GM10248 (cell line): ENCODE measurements at regions of chr10 and their contacts with region 1.

Region 1: DNA sequence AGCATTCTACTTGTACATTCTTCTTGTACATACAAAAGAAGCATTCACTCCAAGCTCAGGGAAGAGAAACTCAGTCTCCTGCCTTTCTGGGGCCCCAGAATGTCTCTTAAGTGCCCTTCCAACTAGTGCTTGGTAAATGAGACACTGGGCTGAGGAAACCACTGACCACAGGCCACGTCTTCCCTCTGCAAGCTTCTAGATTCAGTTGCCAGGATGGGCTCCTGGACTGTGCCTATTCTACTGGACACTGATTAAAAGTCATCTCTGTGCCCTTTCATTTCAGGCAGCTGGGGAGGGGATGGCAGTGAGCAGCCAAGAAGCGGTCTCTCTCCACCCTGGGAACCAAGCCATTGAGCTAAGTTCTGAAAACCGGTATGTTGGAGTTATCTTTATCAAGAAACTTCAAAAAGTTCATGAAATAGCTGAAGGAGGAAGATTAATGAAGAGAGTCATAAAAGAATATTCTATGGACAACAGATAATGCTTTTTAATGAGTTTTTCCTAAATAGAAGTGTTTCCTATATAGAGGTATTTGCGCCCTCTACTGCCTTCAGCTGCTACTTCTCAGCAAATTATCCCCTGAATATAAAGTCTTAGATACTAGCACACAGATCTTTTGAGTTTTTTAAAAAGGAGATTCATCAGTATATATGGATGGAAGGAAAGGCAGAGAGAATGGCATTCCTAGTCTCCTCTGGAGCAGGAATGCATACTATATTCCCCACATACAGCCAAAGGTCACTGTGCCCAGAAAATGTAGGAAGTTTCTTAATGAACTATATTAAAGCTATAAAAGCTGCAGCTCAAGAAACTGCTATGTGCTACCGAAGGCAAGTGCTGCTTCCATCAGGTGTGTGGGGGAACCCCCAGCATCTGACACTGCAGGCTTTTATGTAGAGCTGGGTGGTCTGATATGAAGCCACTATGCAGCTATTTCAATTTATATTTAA is 8.4 kb upstream of the IFIT1B start:
- DNase-seq: peak; percentile 46
- CTCF ChIP-seq: peak; percentile 70

Region 2: DNA sequence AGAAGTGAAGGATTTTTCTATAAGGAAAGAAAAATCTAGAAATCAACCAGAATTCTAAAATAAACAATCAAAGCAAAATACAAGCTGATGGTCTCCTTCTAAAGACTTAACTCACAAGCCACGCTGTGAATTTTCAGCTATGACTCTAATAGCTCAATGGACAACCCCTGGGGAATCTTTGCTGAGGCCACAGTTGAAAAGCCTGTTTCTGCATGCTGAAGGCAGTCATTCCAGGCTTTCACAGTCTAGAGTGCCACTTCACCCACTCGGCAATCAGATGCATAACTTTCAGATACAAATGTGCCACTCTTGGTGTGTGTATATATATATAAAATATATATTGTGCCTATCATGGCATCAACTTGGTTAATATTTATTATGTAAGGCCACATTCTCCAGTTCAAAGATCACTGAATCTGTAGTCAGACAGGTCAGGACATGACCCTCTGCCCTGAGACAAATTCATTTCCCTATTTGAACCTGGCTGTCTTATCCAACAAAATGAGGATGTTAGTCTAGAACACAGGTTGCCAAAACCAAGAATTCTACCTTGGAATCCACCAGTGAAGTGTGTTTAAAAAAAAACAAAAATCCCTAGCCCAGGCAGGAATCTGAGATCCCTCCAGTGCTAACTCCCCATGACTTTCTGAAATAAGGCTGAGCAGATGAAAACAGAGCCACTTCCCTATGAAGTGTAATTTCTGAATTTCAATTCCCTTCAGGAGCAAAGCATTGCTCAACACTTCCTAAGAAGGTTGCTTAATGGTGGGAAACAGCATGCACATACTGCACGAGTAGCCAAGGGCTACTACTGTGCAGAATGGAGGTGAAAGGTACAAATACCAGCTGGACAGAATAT is 127.7 kb before region 1 on chr10:
- CTCF ChIA-PET with region 1: interaction called, 16 read pairs
- POLR2A ChIA-PET with region 1: no interaction called
- DNase-seq: no peak
- CTCF ChIP-seq: no peak

Region 3: DNA sequence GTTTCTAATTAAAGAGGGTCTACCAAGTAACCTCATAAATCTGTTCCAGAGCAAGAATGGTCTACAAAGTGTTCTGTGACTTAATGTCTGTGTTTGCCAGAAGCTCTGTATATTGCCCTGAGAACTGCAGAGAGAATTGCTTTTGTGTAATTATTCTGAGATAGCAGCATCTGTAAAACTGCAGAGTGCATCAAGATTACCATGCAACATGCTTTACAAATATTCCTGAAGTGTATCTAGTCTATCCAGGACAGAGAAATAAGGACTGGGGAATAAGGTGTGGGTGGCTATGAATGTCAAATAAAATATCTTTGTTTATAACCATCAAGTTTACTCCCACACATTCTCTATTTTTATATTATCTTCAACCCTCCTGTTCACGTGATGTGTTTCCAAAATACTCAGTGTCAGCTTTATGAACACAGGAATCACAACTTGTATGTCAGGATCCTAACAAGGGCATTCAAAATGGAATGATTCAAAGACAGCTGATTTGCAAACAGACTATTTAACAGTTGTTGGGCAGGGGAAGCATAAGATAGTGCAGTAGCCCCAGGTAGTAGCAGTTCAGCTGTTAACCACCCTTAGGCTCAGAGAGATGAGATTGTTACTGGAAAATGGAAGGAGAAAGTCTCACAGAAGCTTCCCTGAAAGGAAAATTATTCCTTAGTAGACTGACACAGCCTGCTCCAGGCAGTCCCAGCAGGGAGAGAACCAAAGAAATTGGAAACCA is 102.5 kb before region 1 on chr10:
- CTCF ChIA-PET with region 1: interaction called, 26 read pairs
- POLR2A ChIA-PET with region 1: no interaction called
- DNase-seq: no peak
- CTCF ChIP-seq: no peak

Region 4: DNA sequence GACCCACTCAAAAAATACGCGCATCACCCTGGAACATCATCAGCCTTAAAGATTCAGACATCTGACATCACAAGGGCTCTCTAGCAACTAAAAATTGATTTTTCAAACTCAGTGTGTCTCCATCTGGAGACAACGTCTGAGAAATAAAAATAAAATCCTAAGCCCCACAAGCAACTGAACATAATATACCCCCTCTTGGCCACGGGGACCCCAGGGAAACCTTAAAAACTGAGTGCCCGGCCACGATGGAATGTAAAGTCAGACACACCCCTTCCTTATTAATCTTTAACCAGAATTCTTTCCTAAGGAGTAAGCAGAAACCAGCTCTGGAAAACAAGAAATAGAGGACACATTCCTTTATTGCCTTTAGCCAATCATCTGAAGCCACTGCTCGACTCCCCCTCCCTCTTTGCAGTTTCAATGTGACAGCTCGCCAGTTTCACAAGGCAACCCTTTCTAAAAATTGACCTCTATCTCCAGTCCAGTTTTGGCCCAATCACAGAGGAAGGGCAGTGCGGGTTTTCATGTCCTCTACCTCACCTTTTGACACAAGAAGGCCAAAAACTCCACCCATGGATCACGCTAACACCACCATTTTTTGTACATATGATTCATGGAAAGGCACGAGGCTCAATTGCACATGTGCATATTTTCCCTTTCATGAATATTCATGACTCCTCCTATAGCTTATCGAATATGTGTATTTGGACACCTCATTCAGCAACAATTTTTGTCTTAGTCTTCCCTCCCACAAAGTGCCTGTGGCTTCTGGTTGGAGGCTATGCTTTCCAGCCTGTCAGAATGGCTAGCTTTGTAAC is 17.4 kb before region 1 on chr10:
- CTCF ChIA-PET with region 1: interaction called, 46 read pairs
- POLR2A ChIA-PET with region 1: no interaction called
- DNase-seq: peak; percentile 24
- CTCF ChIP-seq: no peak

Region 5: DNA sequence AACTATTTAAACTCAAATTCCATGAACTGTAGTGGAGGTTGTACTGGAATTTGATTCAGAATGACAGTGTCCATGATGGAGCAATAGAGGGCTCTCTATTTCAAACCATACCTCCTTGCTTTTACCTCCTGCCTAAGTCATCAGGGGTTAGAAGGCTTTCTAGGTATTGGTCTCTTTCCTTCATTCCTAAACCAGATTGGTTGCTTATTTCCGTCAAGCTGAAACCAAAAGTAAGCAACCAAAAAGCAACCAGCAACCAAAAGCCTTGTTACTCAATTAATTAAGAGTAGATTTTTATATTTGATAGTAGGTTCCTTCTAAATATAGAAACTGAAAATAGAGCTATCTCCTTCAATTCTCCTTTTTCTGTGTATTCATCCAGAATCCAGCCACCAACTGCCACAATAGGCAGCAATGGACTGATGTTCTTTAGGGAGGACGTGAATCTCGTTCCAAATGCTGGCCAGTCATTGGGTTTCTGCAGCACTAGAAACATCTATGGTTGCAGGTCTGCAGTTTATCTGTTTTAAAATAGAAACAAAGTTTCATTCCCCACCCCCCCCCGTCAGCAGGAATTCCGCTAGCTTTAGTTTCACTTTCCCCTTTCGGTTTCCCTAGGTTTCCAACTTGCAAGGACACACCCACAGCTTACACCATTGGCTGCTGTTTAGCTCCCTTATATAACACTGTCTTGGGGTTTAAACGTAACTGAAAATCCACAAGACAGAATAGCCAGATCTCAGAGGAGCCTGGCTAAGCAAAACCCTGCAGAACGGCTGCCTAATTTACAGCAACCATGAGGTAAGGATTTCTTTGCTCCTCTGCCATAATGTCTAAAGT is 22.7 kb after region 1 on chr10 and contains the start of gene IFIT1:
- CTCF ChIA-PET with region 1: interaction called, 24 read pairs
- POLR2A ChIA-PET with region 1: no interaction called
- DNase-seq: peak; percentile 59
- CTCF ChIP-seq: no peak

Region 6: DNA sequence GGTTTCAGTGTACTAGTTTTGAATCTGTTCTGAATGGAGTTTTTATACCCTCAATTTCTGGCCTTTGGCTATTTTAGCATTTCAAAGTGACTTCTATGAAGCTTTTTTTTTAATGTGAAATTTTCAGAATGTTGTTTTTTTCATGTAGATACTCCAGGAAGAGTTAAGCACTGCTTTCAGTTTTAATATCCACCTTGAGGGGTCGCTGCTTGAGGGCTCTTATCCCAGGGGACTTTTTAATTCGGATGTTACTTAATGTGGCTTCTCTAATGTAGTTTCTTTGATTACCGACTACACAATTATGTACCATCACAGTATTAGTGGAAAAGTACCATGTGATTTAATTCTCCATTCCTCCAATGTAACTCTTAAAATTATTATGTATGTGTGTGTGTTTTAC is 50.1 kb after region 1 on chr10:
- CTCF ChIA-PET with region 1: interaction called, 11 read pairs
- POLR2A ChIA-PET with region 1: no interaction called
- DNase-seq: no peak
- CTCF ChIP-seq: no peak